CD8-positive, alpha-beta T cell (primary cell): ENCODE measurements at regions of chr1 and their contacts with region 1.

Region 1: DNA sequence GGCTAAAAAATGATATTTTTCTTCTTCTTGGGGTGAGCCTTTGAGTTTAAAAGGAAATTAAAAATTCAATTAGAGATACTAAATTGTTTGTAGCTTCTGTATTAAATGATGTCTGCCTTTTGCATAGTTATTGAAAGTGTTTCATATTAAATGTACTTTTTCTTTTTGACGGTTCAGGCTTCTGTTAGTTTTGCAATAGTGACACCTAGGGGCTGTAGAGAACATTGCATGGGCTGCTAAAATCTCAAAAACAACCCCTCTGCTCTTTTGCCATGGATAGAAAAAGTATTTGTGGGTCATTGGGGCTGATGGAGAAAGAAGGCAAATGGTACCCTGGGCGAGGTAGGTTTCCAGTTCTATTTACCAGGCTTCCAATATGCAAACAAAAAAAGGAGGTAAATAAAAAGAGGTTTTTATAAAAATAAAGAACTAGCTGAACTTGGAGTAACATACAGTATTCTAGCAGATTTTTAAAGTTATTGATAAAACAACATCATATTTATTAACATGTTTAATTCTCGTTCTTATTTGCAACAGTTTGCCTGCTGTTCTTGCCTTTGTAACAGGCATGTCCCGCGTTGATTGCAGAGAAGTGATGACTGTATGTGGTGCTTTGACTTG is 115.4 kb upstream of the HOOK1 start:
- DNase-seq: peak in 4 of 9 experiments; percentile 20 to 70 (median 44)
- ATAC-seq: peak; percentile 55
- H3K4me3 ChIP-seq: no peak overlapping the region
- H3K4me3 Mint-ChIP-seq: no peak overlapping the region
- H3K27ac ChIP-seq: no peak overlapping the region
- H3K27ac Mint-ChIP-seq: no peak overlapping the region
- H3K4me1 ChIP-seq: peaks cover 13% of the 10 kb centered on the region
- H3K4me1 Mint-ChIP-seq: peaks cover 19% of the 10 kb centered on the region
- H3K27me3 ChIP-seq: no peaks in the 10 kb centered on the region
- H3K27me3 Mint-ChIP-seq: no peaks in the 10 kb centered on the region
- CTCF ChIP-seq: peak; percentile 99

Region 2: DNA sequence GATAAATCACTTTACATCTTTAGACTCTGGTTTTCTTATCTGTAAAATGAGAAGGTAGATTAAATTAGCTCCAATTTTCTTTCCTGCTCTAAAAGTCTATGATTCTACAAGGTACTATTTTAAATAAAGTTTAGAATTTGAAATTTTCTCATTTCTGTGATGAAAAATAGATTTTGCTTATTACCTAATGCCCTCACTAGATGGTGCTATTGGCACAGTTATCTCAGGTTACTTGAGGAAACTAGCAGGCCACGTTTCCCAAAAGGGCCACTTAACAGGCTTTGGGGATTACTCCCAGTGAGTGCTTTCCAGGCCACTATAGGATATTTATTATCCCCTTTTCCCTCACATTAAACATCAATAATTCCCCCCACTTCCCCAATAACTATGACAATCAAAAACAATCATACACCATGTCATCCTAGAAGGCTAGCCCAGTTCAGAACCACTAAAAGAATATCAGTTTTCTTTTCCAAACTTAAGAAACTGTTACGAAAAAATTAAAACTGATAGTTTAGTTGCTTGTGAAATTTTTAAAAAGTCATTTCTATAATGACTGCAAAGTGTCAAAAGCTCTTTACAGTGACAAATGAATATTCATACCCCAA is 1183.4 kb before region 1 on chr1:
- CTCF ChIA-PET with region 1: interaction called, 10 read pairs
- POLR2A ChIA-PET with region 1: no interaction called
- intact Hi-C with region 1: loop called in 1 of 2 experiments (anchors 2 kb)
- DNase-seq: peak in 5 of 9 experiments; percentile 16 to 82 (median 27)
- ATAC-seq: peak; percentile 42
- H3K4me3 ChIP-seq: no peak overlapping the region
- H3K4me3 Mint-ChIP-seq: no peak overlapping the region
- H3K27ac ChIP-seq: no peak overlapping the region
- H3K27ac Mint-ChIP-seq: peak overlapping the region; percentile 71
- H3K4me1 ChIP-seq: no peaks in the 10 kb centered on the region
- H3K4me1 Mint-ChIP-seq: peaks cover 8% of the 10 kb centered on the region
- H3K27me3 ChIP-seq: no peaks in the 10 kb centered on the region
- H3K27me3 Mint-ChIP-seq: no peaks in the 10 kb centered on the region
- CTCF ChIP-seq: peak; percentile 72

Region 3: GRCh38 chr1:58718435-58718834 is 980.9 kb before region 1 on chr1:
- CTCF ChIA-PET with region 1: interaction called, 11 read pairs
- POLR2A ChIA-PET with region 1: no interaction called
- intact Hi-C with region 1: no loop called
- DNase-seq: peak in 2 of 9 experiments; percentile 34 to 56
- ATAC-seq: peak; percentile 40
- H3K4me3 ChIP-seq: peak overlapping the region in 1 of 2 experiments; percentile 9
- H3K4me3 Mint-ChIP-seq: peak overlapping the region; percentile 44
- H3K27ac ChIP-seq: peak overlapping the region; percentile 6 to 58
- H3K27ac Mint-ChIP-seq: peak overlapping the region; percentile 43
- H3K4me1 ChIP-seq: peaks cover 15% of the 10 kb centered on the region
- H3K4me1 Mint-ChIP-seq: peaks cover 23% of the 10 kb centered on the region
- H3K27me3 ChIP-seq: no peaks in the 10 kb centered on the region
- H3K27me3 Mint-ChIP-seq: no peaks in the 10 kb centered on the region
- CTCF ChIP-seq: no peak

Region 4: GRCh38 chr1:58739856-58740466 is 959.4 kb before region 1 on chr1:
- CTCF ChIA-PET with region 1: interaction called, 151 read pairs
- POLR2A ChIA-PET with region 1: no interaction called
- intact Hi-C with region 1: loop called (anchors 1 kb)
- DNase-seq: peak in 3 of 9 experiments; percentile 35 to 76 (median 67)
- ATAC-seq: peak; percentile 49
- H3K4me3 ChIP-seq: no peak overlapping the region
- H3K4me3 Mint-ChIP-seq: no peak overlapping the region
- H3K27ac ChIP-seq: no peak overlapping the region
- H3K27ac Mint-ChIP-seq: no peak overlapping the region
- H3K4me1 ChIP-seq: no peaks in the 10 kb centered on the region
- H3K4me1 Mint-ChIP-seq: peaks cover 5% of the 10 kb centered on the region
- H3K27me3 ChIP-seq: no peaks in the 10 kb centered on the region
- H3K27me3 Mint-ChIP-seq: peaks cover 2% of the 10 kb centered on the region
- CTCF ChIP-seq: peak; percentile 98

Region 5: GRCh38 chr1:58768971-58769808 is 930.1 kb before region 1 on chr1:
- CTCF ChIA-PET with region 1: interaction called, 10 read pairs
- POLR2A ChIA-PET with region 1: no interaction called
- intact Hi-C with region 1: no loop called
- DNase-seq: peak in 6 of 9 experiments; percentile 28 to 58 (median 54)
- ATAC-seq: no peak
- H3K4me3 ChIP-seq: no peak overlapping the region
- H3K4me3 Mint-ChIP-seq: no peak overlapping the region
- H3K27ac ChIP-seq: no peak overlapping the region
- H3K27ac Mint-ChIP-seq: no peak overlapping the region
- H3K4me1 ChIP-seq: peaks cover 6% of the 10 kb centered on the region
- H3K4me1 Mint-ChIP-seq: peaks cover 11% of the 10 kb centered on the region
- H3K27me3 ChIP-seq: no peaks in the 10 kb centered on the region
- H3K27me3 Mint-ChIP-seq: peaks cover 2% of the 10 kb centered on the region
- CTCF ChIP-seq: peak; percentile 67

Region 6: GRCh38 chr1:59384443-59384842 is 314.9 kb before region 1 on chr1:
- CTCF ChIA-PET with region 1: no interaction called
- POLR2A ChIA-PET with region 1: no interaction called
- intact Hi-C with region 1: no loop called
- DNase-seq: no peak
- ATAC-seq: no peak
- H3K4me3 ChIP-seq: no peak overlapping the region
- H3K4me3 Mint-ChIP-seq: no peak overlapping the region
- H3K27ac ChIP-seq: no peak overlapping the region
- H3K27ac Mint-ChIP-seq: no peak overlapping the region
- H3K4me1 ChIP-seq: no peaks in the 10 kb centered on the region
- H3K4me1 Mint-ChIP-seq: no peaks in the 10 kb centered on the region
- H3K27me3 ChIP-seq: no peaks in the 10 kb centered on the region
- H3K27me3 Mint-ChIP-seq: no peaks in the 10 kb centered on the region
- CTCF ChIP-seq: no peak

Region 7: DNA sequence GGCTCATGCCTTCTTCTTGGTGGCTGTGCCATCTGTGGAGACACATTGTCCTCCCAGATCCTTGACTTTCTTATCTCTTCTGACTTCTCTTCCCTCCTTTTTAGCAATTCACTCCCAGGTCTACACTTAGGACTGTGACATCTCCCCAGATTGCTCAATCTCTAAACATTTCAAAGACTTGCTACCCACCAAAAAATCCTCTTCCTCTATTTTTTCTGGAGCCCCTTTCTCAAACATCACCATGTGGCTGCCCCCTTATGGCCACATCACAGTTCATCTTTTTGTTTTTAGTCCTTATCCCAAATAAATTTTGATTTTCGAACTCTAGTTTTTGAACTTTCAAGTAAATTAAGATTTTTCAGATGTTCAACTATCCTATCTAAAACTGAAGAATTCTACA is 33.2 kb before region 1 on chr1:
- CTCF ChIA-PET with region 1: no interaction called
- POLR2A ChIA-PET with region 1: no interaction called
- intact Hi-C with region 1: no loop called
- DNase-seq: no peak
- ATAC-seq: no peak
- H3K4me3 ChIP-seq: no peak overlapping the region
- H3K4me3 Mint-ChIP-seq: no peak overlapping the region
- H3K27ac ChIP-seq: no peak overlapping the region
- H3K27ac Mint-ChIP-seq: no peak overlapping the region
- H3K4me1 ChIP-seq: no peaks in the 10 kb centered on the region
- H3K4me1 Mint-ChIP-seq: no peaks in the 10 kb centered on the region
- H3K27me3 ChIP-seq: no peaks in the 10 kb centered on the region
- H3K27me3 Mint-ChIP-seq: no peaks in the 10 kb centered on the region
- CTCF ChIP-seq: no peak

Region 8: DNA sequence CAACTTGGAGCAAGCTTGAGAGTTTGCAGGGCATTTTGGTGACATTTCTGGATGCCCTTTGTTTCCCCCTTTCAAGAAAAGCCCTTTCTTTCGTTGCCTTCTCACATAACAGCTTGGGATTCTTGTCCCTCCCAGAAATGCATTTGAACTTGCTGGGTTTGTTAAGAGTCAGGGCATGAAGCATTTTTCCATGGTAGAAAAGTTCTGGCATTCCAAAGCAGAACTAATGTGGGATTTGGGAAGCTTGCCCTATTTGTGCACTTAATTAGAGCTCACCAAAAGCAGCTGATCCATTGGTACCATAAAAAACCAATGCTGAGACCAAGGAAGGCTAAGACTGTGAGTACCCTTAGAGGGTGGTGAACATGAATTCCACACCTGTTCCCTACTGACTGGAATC is 15.6 kb after region 1 on chr1:
- CTCF ChIA-PET with region 1: interaction called, 10 read pairs
- POLR2A ChIA-PET with region 1: no interaction called
- intact Hi-C with region 1: no loop called
- DNase-seq: no peak
- ATAC-seq: no peak
- H3K4me3 ChIP-seq: no peak overlapping the region
- H3K4me3 Mint-ChIP-seq: no peak overlapping the region
- H3K27ac ChIP-seq: no peak overlapping the region
- H3K27ac Mint-ChIP-seq: no peak overlapping the region
- H3K4me1 ChIP-seq: no peaks in the 10 kb centered on the region
- H3K4me1 Mint-ChIP-seq: no peaks in the 10 kb centered on the region
- H3K27me3 ChIP-seq: no peaks in the 10 kb centered on the region
- H3K27me3 Mint-ChIP-seq: no peaks in the 10 kb centered on the region
- CTCF ChIP-seq: no peak

Region 9: GRCh38 chr1:59747420-59748024 is 48.2 kb after region 1 on chr1:
- CTCF ChIA-PET with region 1: no interaction called
- POLR2A ChIA-PET with region 1: no interaction called
- intact Hi-C with region 1: no loop called
- DNase-seq: no peak
- ATAC-seq: no peak
- H3K4me3 ChIP-seq: no peak overlapping the region
- H3K4me3 Mint-ChIP-seq: no peak overlapping the region
- H3K27ac ChIP-seq: no peak overlapping the region
- H3K27ac Mint-ChIP-seq: no peak overlapping the region
- H3K4me1 ChIP-seq: no peaks in the 10 kb centered on the region
- H3K4me1 Mint-ChIP-seq: no peaks in the 10 kb centered on the region
- H3K27me3 ChIP-seq: no peaks in the 10 kb centered on the region
- H3K27me3 Mint-ChIP-seq: no peaks in the 10 kb centered on the region
- CTCF ChIP-seq: no peak